ENCODE measurements at regions of chr16 and their contacts with region 1.

Region 1: GRCh38 chr16:27401768-27402568 is at the start of gene IL21R:
- DNase-seq: peak; percentile 72 to 91 (median 87)
- ATAC-seq: peak; percentile 91
- H3K4me3 ChIP-seq: peak within 1 kb of the TSS; percentile 88
- H3K4me3 Mint-ChIP-seq: peak within 1 kb of the TSS; percentile 76 to 99 (median 98)
- H3K27ac ChIP-seq: peak within 1 kb of the TSS; percentile 91
- H3K27ac Mint-ChIP-seq: peak within 1 kb of the TSS; percentile 89 to 99 (median 98)
- H3K4me1 ChIP-seq: peaks cover 38 to 44% of the 10 kb centered on the region in 2 donors
- H3K4me1 Mint-ChIP-seq: peaks cover 23 to 75% (median 70%) of the 10 kb centered on the region in 7 donors
- H3K27me3 ChIP-seq: no peaks in the 10 kb centered on the region
- H3K27me3 Mint-ChIP-seq: no peaks in the 10 kb centered on the region
- total RNA-seq, gene IL21R: 24.6 to 40.9 (median 31.4) TPM

Region 2: GRCh38 chr16:27154705-27155521 is 247.1 kb before region 1 on chr16:
- CTCF ChIA-PET with region 1: no interaction called
- POLR2A ChIA-PET with region 1: no interaction called
- intact Hi-C with region 1: no loop called
- DNase-seq: peak; percentile 26 to 74 (median 56)
- ATAC-seq: peak; percentile 90
- H3K4me3 ChIP-seq: no peak overlapping the region
- H3K4me3 Mint-ChIP-seq: peak overlapping the region in 2 of 10 donors; percentile 3 to 16
- H3K27ac ChIP-seq: no peak overlapping the region
- H3K27ac Mint-ChIP-seq: peak overlapping the region in 7 of 9 donors; percentile 18 to 91 (median 61)
- H3K4me1 ChIP-seq: peaks cover 0 to 8% of the 10 kb centered on the region in 2 donors
- H3K4me1 Mint-ChIP-seq: peaks cover 6 to 28% (median 15%) of the 10 kb centered on the region in 7 donors
- H3K27me3 ChIP-seq: no peaks in the 10 kb centered on the region
- H3K27me3 Mint-ChIP-seq: no peaks in the 10 kb centered on the region

Region 3: DNA sequence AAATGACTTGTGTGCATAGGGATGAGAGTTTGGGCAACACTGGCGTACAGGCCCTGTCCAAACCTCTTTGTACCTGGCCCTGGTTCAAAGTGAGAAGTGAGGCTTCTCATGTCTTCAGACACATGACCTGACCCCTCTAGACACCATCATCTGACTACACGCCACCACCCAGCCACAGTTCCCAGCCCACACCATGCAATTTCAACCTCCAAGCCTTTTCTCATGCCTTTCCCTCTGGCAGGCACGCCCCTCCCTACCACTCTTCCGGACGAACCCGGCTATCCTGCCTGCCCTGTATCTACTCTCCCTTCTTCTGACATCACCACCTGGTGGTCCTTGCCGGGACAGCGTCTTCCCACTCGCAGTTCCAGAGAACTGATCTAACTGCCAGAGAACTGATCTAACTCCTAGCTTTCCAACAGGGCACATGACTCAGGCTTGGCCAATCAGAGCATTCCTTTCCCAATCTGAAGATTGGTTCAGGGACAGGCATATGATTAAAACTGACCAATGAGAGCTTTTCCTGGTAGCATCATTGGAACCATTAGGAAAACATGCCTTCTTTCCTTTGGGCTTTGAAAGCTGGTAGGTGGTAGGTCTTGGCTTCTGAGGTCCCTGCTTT is 27.1 kb before region 1 on chr16:
- CTCF ChIA-PET with region 1: interaction called, 5 read pairs
- POLR2A ChIA-PET with region 1: interaction called, 30 read pairs
- intact Hi-C with region 1: loop called (anchors 1 to 2 kb)
- DNase-seq: peak in 1 of 9 donors; percentile 50
- ATAC-seq: peak; percentile 64
- H3K4me3 ChIP-seq: no peak overlapping the region
- H3K4me3 Mint-ChIP-seq: no peak overlapping the region
- H3K27ac ChIP-seq: peak overlapping the region; percentile 53
- H3K27ac Mint-ChIP-seq: no peak overlapping the region
- H3K4me1 ChIP-seq: peaks cover 32 to 71% of the 10 kb centered on the region in 2 donors
- H3K4me1 Mint-ChIP-seq: peaks cover 29 to 53% (median 45%) of the 10 kb centered on the region in 7 donors
- H3K27me3 ChIP-seq: no peaks in the 10 kb centered on the region
- H3K27me3 Mint-ChIP-seq: no peaks in the 10 kb centered on the region

Region 4: GRCh38 chr16:27414758-27415431 is 12.9 kb after region 1 on chr16:
- CTCF ChIA-PET with region 1: no interaction called
- POLR2A ChIA-PET with region 1: interaction called, 8 read pairs
- intact Hi-C with region 1: loop called in 1 of 2 experiments (anchors 1 kb)
- DNase-seq: no peak
- ATAC-seq: no peak
- H3K4me3 ChIP-seq: no peak overlapping the region
- H3K4me3 Mint-ChIP-seq: peak overlapping the region in 5 of 10 donors; percentile 5 to 49 (median 30)
- H3K27ac ChIP-seq: peak overlapping the region; percentile 13
- H3K27ac Mint-ChIP-seq: peak overlapping the region in 7 of 9 donors; percentile 3 to 75 (median 51)
- H3K4me1 ChIP-seq: peaks cover 6 to 15% of the 10 kb centered on the region in 2 donors
- H3K4me1 Mint-ChIP-seq: peaks cover 45 to 72% (median 67%) of the 10 kb centered on the region in 7 donors
- H3K27me3 ChIP-seq: no peaks in the 10 kb centered on the region
- H3K27me3 Mint-ChIP-seq: no peaks in the 10 kb centered on the region

Region 5: GRCh38 chr16:27449434-27450195 is 47.6 kb after region 1 on chr16:
- CTCF ChIA-PET with region 1: interaction called, 3 read pairs
- POLR2A ChIA-PET with region 1: interaction called, 22 read pairs
- intact Hi-C with region 1: loop called in 1 of 2 experiments (anchors 1 kb)
- DNase-seq: peak in 6 of 9 donors; percentile 27 to 73 (median 40)
- ATAC-seq: peak; percentile 79
- H3K4me3 ChIP-seq: no peak overlapping the region
- H3K4me3 Mint-ChIP-seq: peak overlapping the region; percentile 16 to 66 (median 42)
- H3K27ac ChIP-seq: peak overlapping the region; percentile 57
- H3K27ac Mint-ChIP-seq: peak overlapping the region; percentile 66 to 93 (median 85)
- H3K4me1 ChIP-seq: peaks cover 48 to 67% of the 10 kb centered on the region in 2 donors
- H3K4me1 Mint-ChIP-seq: peaks cover 52 to 91% (median 66%) of the 10 kb centered on the region in 7 donors
- H3K27me3 ChIP-seq: no peaks in the 10 kb centered on the region
- H3K27me3 Mint-ChIP-seq: no peaks in the 10 kb centered on the region

Region 6: GRCh38 chr16:27549859-27550581 is 148.1 kb after region 1 on chr16 and contains the starts of genes GTF3C1 and KATNIP:
- CTCF ChIA-PET with region 1: no interaction called
- POLR2A ChIA-PET with region 1: interaction called, 3 read pairs
- intact Hi-C with region 1: loop called in 1 of 2 experiments (anchors 1 kb)
- DNase-seq: peak; percentile 100
- ATAC-seq: peak; percentile 100
- H3K4me3 ChIP-seq: peak within 1 kb of the TSS; percentile 100
- H3K4me3 Mint-ChIP-seq: peak within 1 kb of the TSS; percentile 95 to 98 (median 97)
- H3K27ac ChIP-seq: peak within 1 kb of the TSS; percentile 85
- H3K27ac Mint-ChIP-seq: peak within 1 kb of the TSS; percentile 94 to 99 (median 98)
- H3K4me1 ChIP-seq: peaks cover 21 to 22% of the 10 kb centered on the region in 2 donors
- H3K4me1 Mint-ChIP-seq: peaks cover 26 to 51% (median 44%) of the 10 kb centered on the region in 7 donors
- H3K27me3 ChIP-seq: no peaks in the 10 kb centered on the region
- H3K27me3 Mint-ChIP-seq: peaks cover 0 to 2% (median 0%) of the 10 kb centered on the region in 5 donors
- total RNA-seq, gene GTF3C1: 51.8 to 60.0 (median 52.6) TPM
- total RNA-seq, gene KATNIP: 18.7 to 39.0 (median 21.3) TPM

Region 7: DNA sequence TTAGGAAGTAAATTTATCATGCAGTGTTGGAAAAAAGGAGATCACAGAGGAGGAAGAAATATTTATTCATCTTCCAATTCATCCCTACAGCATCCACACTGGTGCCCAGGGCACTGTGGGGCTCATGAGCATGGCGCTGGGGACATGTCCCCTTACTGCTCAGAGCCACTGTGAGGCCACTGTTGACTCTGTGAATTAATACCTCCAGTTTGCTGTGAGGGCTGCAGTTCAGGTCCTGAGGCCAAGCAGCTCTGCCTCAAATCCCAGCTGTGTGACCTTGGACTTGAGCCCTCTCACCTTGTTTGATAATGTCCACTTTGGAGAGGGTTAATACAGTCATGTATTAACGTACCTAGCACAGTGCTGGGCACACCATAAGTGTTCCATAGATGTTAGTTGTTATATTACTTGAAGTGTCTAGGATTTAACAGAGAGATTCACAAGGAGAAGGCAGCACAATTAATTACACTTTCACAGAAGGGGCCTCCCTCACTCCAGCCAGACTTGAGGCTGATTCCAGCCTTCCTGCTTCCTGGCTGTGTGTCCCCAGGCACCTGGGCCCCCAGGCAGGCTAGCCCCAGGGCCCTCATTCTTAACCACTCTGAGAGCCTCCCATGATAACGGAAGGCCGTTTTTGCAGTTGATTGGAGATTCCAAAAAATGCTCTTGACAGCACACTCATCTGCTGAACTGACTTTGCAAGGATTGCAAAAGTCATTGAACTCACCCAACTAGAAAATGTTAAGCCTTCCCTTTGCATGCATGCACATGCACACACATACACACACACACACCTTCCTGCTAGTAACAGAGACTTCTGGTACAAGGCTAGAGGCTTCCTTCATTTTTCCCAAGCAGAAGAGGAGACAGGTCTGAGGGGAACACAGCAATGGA is 177.4 kb after region 1 on chr16:
- CTCF ChIA-PET with region 1: no interaction called
- POLR2A ChIA-PET with region 1: no interaction called
- intact Hi-C with region 1: no loop called
- DNase-seq: no peak
- ATAC-seq: no peak
- H3K4me3 ChIP-seq: no peak overlapping the region
- H3K4me3 Mint-ChIP-seq: no peak overlapping the region
- H3K27ac ChIP-seq: no peak overlapping the region
- H3K27ac Mint-ChIP-seq: peak overlapping the region in 1 of 9 donors; percentile 31
- H3K4me1 ChIP-seq: no peaks in the 10 kb centered on the region
- H3K4me1 Mint-ChIP-seq: peaks cover 0 to 11% (median 0%) of the 10 kb centered on the region in 7 donors
- H3K27me3 ChIP-seq: no peaks in the 10 kb centered on the region
- H3K27me3 Mint-ChIP-seq: no peaks in the 10 kb centered on the region